Activated T-helper 2 cell treated with anti-CD3 and anti-CD28 coated beads, Interferon-gamma antibody, Interleukin-2, Interleukin-4, amounts not matched to agents 10 μg/mL and 5 μg/mL and 100 μg/mL, durations not matched to agents 14 hours and 24 hours and 36 hours (primary cell): ENCODE measurements at regions of chr1 and their contacts with region 1.

Region 1: DNA sequence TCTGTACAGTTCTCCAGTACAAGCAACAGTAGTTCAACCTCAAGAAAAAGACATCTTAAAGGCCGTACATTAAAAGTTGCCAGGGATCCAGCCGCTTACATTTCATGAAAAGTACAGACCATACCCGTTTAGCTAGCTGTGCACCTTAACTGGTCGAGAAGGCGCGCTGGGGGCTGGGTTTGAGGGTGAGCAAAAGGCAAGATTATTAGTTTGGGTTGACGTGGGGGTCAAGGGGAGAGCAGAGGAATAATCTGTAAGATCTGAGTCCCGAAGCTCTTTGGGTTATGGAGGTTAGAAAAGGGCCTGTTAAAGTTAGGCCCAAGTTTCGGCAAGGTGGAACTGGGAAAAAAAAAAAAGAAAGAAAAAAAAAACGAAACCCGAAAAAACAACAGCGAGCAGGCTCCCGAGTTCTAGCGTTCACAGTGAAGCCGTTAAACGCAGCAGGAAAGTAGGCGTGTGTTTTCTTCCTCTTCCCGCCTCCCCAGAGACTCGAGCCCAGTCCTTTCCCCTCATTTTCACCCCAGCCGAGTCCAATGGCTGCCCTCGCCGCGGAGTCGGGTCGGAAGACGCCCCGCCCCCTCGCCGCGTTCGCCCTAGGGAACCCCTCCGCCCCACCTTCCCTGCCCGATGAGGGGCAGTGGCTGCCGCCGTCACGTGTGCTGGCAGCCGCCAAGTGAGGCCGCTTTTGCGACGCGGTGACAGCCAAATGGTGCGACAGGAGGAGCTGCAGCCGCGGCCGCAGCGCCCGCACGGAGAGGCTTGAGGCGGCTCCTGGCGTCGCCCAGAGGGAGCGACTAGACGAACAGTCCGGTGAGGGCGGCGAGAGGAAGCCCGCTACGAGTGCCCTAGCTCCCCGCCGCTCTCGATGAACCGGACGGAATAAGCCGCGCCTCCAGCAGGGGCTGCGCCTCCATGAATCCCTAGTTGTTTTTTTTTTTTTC is at the start of gene PKN2:
- DNase-seq: peak; percentile 97
- H3K4me3 Mint-ChIP-seq: peak within 1 kb of the TSS; percentile 99
- H3K27ac Mint-ChIP-seq: peak within 1 kb of the TSS; percentile 98
- H3K4me1 Mint-ChIP-seq: peaks cover 20% of the 10 kb centered on the region
- H3K27me3 Mint-ChIP-seq: peaks cover 9% of the 10 kb centered on the region
- total RNA-seq, gene PKN2: 21.2 and 21.4 TPM in 2 replicates

Region 2: GRCh38 chr1:86696522-86696921 is 1987.3 kb before region 1 on chr1:
- intact Hi-C with region 1: loop called (anchors 10 kb)
- DNase-seq: no peak
- H3K4me3 Mint-ChIP-seq: no peak overlapping the region
- H3K27ac Mint-ChIP-seq: no peak overlapping the region
- H3K4me1 Mint-ChIP-seq: no peaks in the 10 kb centered on the region
- H3K27me3 Mint-ChIP-seq: peaks cover 15% of the 10 kb centered on the region

Region 3: GRCh38 chr1:87335175-87335884 is 1348.5 kb before region 1 on chr1:
- intact Hi-C with region 1: loop called (anchors 10 kb)
- DNase-seq: peak; percentile 59
- H3K4me3 Mint-ChIP-seq: peak overlapping the region; percentile 84
- H3K27ac Mint-ChIP-seq: peak overlapping the region; percentile 89
- H3K4me1 Mint-ChIP-seq: peaks cover 50% of the 10 kb centered on the region
- H3K27me3 Mint-ChIP-seq: peaks cover 32% of the 10 kb centered on the region

Region 4: GRCh38 chr1:88204064-88204463 is 479.7 kb before region 1 on chr1:
- intact Hi-C with region 1: no loop called
- DNase-seq: no peak
- H3K4me3 Mint-ChIP-seq: no peak overlapping the region
- H3K27ac Mint-ChIP-seq: no peak overlapping the region
- H3K4me1 Mint-ChIP-seq: no peaks in the 10 kb centered on the region
- H3K27me3 Mint-ChIP-seq: no peaks in the 10 kb centered on the region

Region 5: DNA sequence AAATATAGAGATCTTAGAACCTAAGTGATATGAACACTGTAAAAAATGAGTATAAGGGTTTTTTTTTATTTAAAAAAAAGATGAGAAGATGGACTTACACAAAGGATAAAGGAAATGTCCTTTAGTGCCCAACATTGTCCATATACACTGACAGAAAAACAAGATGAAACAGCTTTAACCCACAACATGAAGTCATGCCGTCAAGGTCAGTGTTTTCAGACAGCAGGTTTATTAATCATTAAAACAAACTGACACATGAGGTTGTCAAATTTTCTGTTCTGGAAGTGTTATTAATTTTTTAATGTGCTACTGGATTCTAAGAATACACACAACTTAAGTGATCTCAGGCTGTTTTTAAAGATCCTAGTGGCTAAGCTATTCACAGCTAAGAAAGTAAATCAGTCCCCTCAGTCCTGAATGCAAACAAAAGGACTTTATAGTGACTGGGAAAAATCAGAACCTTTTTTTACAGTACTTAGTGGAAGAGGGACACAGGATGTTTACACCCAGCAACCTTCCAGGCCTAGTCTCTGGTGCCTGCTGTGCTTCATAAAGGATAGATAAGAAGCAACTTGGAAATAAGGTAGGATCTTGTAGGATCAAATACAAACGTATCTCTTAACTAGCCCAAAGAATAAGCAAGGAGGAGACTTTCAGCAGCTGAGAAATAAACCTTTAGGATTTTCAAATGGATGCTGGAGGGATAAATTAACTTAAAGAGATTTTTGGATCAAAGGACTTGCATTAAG is 21.7 kb before region 1 on chr1:
- intact Hi-C with region 1: loop called (anchors 1 kb)
- DNase-seq: no peak
- H3K4me3 Mint-ChIP-seq: no peak overlapping the region
- H3K27ac Mint-ChIP-seq: no peak overlapping the region
- H3K4me1 Mint-ChIP-seq: peaks cover 31% of the 10 kb centered on the region
- H3K27me3 Mint-ChIP-seq: peaks cover 8% of the 10 kb centered on the region

Region 6: DNA sequence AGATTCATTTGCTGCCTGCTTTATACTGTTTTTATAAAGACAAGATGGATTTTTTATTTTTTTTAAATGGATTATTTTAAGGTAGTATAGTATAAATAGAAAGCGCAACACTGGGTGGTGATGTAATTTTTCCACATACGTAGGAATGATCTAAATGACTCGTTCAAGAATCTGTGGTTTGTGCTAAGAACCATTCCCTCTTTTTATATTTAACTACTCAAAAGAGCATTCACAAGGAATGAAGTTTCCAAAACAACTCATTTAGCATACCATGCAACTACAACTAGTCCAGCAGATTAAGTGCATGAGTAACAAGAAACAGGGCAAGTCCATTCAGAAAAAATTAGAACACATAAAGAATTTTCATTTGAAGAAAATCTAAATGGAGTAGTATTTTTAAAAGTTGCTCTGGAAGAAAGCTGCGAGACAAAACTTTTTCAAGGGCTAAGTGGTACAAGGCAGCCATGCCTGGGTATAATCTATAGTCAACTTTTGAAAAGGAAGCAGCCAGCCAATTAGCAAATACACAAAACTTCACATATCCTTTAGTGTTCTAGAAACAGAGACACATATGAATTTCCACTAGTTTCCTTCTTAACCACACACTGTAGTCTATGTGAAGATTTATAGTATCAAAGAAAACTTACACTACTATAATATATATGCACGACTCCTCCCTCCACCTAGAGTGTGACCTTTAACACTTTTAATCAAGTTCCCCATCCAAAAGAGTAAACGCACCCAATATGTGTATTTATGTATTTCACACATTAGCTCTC is 184.1 kb after region 1 on chr1:
- intact Hi-C with region 1: loop called (anchors 1 kb)
- DNase-seq: no peak
- H3K4me3 Mint-ChIP-seq: peak overlapping the region; percentile 66
- H3K27ac Mint-ChIP-seq: peak overlapping the region; percentile 92
- H3K4me1 Mint-ChIP-seq: peaks cover 35% of the 10 kb centered on the region
- H3K27me3 Mint-ChIP-seq: no peaks in the 10 kb centered on the region

Region 7: DNA sequence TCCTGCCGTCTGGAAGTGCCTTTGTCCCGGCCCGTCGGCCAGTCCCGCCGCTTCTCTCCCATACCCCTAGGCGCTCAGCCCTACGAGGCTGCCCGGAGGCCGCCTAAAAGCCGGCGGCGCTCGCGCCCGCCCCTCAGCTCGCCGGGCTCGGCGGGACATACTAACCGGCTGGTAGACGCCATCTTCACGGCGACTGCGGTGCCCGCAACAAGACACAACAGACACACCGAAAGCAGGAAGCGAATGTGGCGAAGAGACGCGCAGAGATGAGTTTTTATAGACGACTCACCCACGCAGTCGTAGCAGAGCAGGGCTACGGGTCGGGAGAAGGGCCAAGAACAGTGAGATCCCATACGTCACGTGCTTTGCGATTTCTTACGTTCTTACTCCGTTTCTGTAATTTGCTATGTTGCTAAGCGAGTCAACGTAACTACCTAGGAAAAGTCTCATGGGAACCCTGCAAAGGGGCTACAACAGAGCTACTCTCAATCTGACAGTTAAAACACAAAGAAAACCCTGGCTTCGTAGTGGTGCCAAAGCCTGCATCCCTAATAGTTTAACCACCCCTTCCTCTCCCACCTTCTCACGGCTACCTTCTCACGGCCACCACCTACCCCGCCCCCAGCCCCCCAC is 207.6 kb after region 1 on chr1 and contains the start of gene GTF2B:
- intact Hi-C with region 1: loop called (anchors 1 kb)
- DNase-seq: peak; percentile 93
- H3K4me3 Mint-ChIP-seq: peak within 1 kb of the TSS; percentile 97
- H3K27ac Mint-ChIP-seq: peak within 1 kb of the TSS; percentile 96
- H3K4me1 Mint-ChIP-seq: peaks cover 37% of the 10 kb centered on the region
- H3K27me3 Mint-ChIP-seq: peaks cover 2% of the 10 kb centered on the region
- total RNA-seq, gene GTF2B: 37.6 and 42.2 TPM in 2 replicates